ENCODE measurements at regions of chr3 and their contacts with region 1.

Region 1: GRCh38 chr3:172341482-172342059 is 106.7 kb downstream of the GHSR start:
- DNase-seq: peak in 7 of 9 donors; percentile 30 to 73 (median 67)
- ATAC-seq: peak; percentile 85
- H3K4me3 ChIP-seq: no peak overlapping the region
- H3K4me3 Mint-ChIP-seq: no peak overlapping the region
- H3K27ac ChIP-seq: no peak overlapping the region
- H3K27ac Mint-ChIP-seq: no peak overlapping the region
- H3K4me1 ChIP-seq: no peaks in the 10 kb centered on the region
- H3K4me1 Mint-ChIP-seq: peaks cover 0 to 2% (median 0%) of the 10 kb centered on the region in 7 donors
- H3K27me3 ChIP-seq: no peaks in the 10 kb centered on the region
- H3K27me3 Mint-ChIP-seq: no peaks in the 10 kb centered on the region

Region 2: GRCh38 chr3:171049861-171050444 is 1291.6 kb before region 1 on chr3:
- CTCF ChIA-PET with region 1: no interaction called
- POLR2A ChIA-PET with region 1: no interaction called
- intact Hi-C with region 1: loop called in 1 of 2 experiments (anchors 1 kb)
- DNase-seq: peak in 6 of 9 donors; percentile 8 to 36 (median 14)
- ATAC-seq: peak; percentile 67
- H3K4me3 ChIP-seq: no peak overlapping the region
- H3K4me3 Mint-ChIP-seq: no peak overlapping the region
- H3K27ac ChIP-seq: no peak overlapping the region
- H3K27ac Mint-ChIP-seq: no peak overlapping the region
- H3K4me1 ChIP-seq: no peaks in the 10 kb centered on the region
- H3K4me1 Mint-ChIP-seq: no peaks in the 10 kb centered on the region
- H3K27me3 ChIP-seq: no peaks in the 10 kb centered on the region
- H3K27me3 Mint-ChIP-seq: peaks cover 9 to 27% (median 13%) of the 10 kb centered on the region in 5 donors

Region 3: DNA sequence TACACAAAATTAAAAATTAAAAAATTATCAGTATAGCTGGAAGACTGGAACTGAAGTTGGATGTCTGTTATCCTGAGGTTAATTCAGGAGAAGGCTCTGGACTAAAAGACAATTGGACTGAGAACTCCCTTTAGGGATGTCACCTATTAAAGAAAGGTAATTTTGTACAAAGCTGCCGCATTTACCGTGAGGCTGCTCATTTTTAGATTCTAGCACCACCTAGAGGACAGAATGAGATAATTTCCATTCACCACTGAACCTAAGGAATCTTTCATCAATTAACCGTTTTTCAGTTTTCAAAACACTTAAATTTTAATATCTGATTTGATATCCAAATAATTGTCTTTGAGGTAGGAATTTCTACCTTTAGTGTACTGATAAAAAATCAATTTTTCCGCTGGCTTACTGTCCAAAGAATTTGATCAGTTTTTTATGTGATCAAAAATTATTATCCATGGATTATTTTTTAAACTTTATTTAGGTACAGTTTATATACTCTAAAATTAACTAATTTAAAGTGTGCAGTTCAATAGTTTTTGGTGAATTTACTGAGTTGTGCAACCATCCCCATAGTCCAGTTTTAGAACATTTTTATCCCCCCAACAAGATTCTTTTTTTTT is 774.7 kb before region 1 on chr3:
- CTCF ChIA-PET with region 1: no interaction called
- POLR2A ChIA-PET with region 1: no interaction called
- intact Hi-C with region 1: loop called (anchors 2 to 5 kb)
- DNase-seq: peak in 7 of 9 donors; percentile 22 to 67 (median 54)
- ATAC-seq: peak; percentile 72
- H3K4me3 ChIP-seq: no peak overlapping the region
- H3K4me3 Mint-ChIP-seq: no peak overlapping the region
- H3K27ac ChIP-seq: no peak overlapping the region
- H3K27ac Mint-ChIP-seq: peak overlapping the region in 1 of 9 donors; percentile 44
- H3K4me1 ChIP-seq: peaks cover 0 to 4% of the 10 kb centered on the region in 2 donors
- H3K4me1 Mint-ChIP-seq: peaks cover 3 to 38% (median 6%) of the 10 kb centered on the region in 7 donors
- H3K27me3 ChIP-seq: no peaks in the 10 kb centered on the region
- H3K27me3 Mint-ChIP-seq: peaks cover 0 to 32% (median 0%) of the 10 kb centered on the region in 5 donors

Region 4: DNA sequence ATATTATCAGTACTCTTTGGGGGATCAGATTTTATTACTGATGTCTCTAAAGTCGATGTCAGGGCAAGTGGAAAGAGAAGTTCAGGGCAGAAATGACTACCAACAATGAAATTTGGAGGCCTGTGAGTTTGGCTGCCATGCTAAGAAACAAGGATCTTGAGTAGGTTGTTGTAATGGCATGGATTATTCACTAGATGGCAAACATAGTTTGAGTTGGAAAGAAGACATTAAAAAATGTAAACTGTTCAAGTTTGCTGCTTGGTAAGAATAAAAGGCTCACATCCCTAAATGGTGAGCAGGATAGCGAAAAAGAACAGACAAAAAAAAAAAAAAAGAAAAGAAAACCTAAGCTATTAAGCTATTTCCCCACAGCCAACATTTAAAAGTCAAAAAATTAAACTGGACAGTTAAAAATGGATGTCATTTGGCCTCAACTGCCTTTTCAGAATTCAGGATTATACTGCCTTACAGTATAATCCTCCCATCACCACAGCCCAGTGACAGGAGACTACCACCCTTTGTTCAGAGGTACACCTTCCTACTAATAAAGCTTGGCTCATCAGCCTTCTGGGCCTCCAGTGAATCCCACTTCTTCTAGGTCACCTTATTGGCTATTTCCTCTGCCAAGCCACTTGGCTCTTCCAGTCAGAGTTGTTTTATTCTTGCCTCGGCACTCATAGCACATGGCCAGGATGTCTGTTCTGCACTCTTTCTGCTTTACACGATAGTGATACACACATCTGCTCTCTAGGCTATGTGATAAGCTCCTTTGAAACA is 695.0 kb before region 1 on chr3:
- CTCF ChIA-PET with region 1: interaction called, 3 read pairs
- POLR2A ChIA-PET with region 1: no interaction called
- intact Hi-C with region 1: loop called (anchors 1 to 2 kb)
- DNase-seq: peak in 5 of 9 donors; percentile 2 to 19 (median 11)
- ATAC-seq: peak; percentile 40
- H3K4me3 ChIP-seq: no peak overlapping the region
- H3K4me3 Mint-ChIP-seq: no peak overlapping the region
- H3K27ac ChIP-seq: no peak overlapping the region
- H3K27ac Mint-ChIP-seq: no peak overlapping the region
- H3K4me1 ChIP-seq: no peaks in the 10 kb centered on the region
- H3K4me1 Mint-ChIP-seq: no peaks in the 10 kb centered on the region
- H3K27me3 ChIP-seq: no peaks in the 10 kb centered on the region
- H3K27me3 Mint-ChIP-seq: peaks cover 0 to 2% (median 0%) of the 10 kb centered on the region in 5 donors

Region 5: DNA sequence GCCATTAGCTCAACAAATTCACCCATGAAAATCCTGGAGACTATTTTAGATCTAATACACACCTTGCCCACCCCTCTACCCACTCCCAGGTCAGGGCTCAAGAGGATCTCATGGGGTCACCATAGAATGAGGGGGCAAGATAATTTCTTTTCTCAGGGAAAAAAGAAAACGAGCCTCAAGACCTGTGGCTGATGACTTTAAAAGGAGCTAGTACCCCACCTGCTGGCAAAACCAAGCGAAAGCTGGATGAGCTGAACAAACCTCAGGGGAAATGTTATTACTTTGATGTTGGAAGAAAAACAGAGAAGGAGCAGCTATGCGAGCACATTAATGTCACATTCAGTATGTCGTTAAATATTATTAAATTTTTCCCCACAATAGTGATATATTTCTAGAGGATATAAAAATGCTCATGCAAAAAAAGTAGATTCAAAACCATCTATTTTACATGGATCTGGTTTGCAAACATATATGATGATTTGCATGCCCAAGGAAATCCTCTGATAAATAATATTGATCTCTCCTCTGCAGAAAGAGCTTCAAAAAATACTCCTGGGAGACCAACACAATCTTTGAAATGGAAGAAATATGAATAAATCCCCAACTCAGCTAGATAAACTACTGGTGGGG is 569.0 kb before region 1 on chr3:
- CTCF ChIA-PET with region 1: interaction called, 9 read pairs
- POLR2A ChIA-PET with region 1: no interaction called
- intact Hi-C with region 1: loop called (anchors 1 to 10 kb)
- DNase-seq: peak in 7 of 9 donors; percentile 6 to 55 (median 36)
- ATAC-seq: peak; percentile 58
- H3K4me3 ChIP-seq: no peak overlapping the region
- H3K4me3 Mint-ChIP-seq: no peak overlapping the region
- H3K27ac ChIP-seq: no peak overlapping the region
- H3K27ac Mint-ChIP-seq: no peak overlapping the region
- H3K4me1 ChIP-seq: no peaks in the 10 kb centered on the region
- H3K4me1 Mint-ChIP-seq: peaks cover 0 to 9% (median 0%) of the 10 kb centered on the region in 7 donors
- H3K27me3 ChIP-seq: no peaks in the 10 kb centered on the region
- H3K27me3 Mint-ChIP-seq: peaks cover 0 to 29% (median 0%) of the 10 kb centered on the region in 5 donors

Region 6: GRCh38 chr3:172280406-172281051 is 61.0 kb before region 1 on chr3:
- CTCF ChIA-PET with region 1: no interaction called
- POLR2A ChIA-PET with region 1: no interaction called
- intact Hi-C with region 1: no loop called
- DNase-seq: no peak
- ATAC-seq: no peak
- H3K4me3 ChIP-seq: no peak overlapping the region
- H3K4me3 Mint-ChIP-seq: no peak overlapping the region
- H3K27ac ChIP-seq: no peak overlapping the region
- H3K27ac Mint-ChIP-seq: no peak overlapping the region
- H3K4me1 ChIP-seq: no peaks in the 10 kb centered on the region
- H3K4me1 Mint-ChIP-seq: peaks cover 0 to 9% (median 3%) of the 10 kb centered on the region in 7 donors
- H3K27me3 ChIP-seq: no peaks in the 10 kb centered on the region
- H3K27me3 Mint-ChIP-seq: no peaks in the 10 kb centered on the region

Region 7: DNA sequence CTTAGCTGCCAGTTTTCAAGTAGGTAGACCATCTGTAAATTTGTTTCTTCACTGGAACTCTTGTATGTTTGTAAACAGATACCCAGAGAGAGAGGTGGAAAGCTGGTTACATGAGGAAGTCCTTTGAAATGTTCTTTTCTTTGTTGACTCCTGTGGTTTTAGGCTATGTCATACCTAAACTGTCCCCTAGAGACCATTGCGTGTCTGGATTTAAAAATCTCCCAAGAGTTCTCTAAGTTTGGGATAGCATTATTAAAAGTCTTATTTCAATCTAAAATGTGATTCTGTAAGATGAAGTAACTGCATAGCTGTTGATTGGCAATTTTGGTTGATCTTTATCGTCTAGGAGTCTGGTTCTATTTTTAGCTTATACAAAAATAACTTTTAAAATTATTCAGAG is 20.5 kb before region 1 on chr3:
- CTCF ChIA-PET with region 1: no interaction called
- POLR2A ChIA-PET with region 1: no interaction called
- intact Hi-C with region 1: no loop called
- DNase-seq: no peak
- ATAC-seq: no peak
- H3K4me3 ChIP-seq: no peak overlapping the region
- H3K4me3 Mint-ChIP-seq: no peak overlapping the region
- H3K27ac ChIP-seq: no peak overlapping the region
- H3K27ac Mint-ChIP-seq: peak overlapping the region in 1 of 9 donors; percentile 12
- H3K4me1 ChIP-seq: no peaks in the 10 kb centered on the region
- H3K4me1 Mint-ChIP-seq: peaks cover 0 to 23% (median 0%) of the 10 kb centered on the region in 7 donors
- H3K27me3 ChIP-seq: no peaks in the 10 kb centered on the region
- H3K27me3 Mint-ChIP-seq: no peaks in the 10 kb centered on the region

Region 8: DNA sequence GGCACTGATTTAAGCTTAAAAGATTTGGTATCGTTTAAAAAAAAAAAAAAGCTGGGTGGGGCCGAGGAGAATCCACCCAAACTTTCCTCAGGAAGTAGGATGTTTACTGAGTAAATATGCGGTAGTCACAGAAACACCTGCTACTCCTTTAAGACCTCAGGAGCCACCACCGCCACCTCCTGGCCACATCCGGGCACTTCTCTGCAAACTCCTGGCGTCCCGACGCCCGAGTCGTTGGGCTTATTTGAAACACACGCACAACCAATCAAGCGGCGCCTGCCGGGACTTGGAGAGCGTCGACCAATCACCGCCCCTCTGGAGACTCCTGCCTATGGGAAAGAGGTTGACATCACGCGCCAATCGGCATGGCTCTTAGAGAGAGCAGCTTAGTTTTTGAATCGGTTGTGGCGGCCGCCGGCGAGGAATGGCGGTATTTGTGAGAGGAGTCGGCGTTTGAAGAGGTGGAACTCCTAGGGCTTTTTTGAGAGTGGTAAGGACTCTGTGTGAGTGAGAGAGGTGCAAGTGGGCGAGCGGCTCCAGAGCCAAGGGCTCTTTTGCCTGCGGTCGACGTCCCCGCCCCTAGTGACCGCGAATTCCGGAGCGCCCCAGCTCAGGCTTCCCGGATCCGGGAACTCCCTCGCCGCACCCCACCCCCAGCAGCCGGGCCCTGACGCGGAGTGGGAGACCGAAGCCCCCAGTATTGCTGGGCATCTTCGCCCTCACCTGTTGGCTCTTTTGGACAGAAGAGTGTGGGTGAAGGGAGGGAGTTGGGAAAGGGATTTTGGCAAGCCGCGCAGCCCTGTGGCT is 409.0 kb after region 1 on chr3 and contains the start of gene ECT2:
- CTCF ChIA-PET with region 1: no interaction called
- POLR2A ChIA-PET with region 1: no interaction called
- intact Hi-C with region 1: loop called in 1 of 2 experiments (anchors 5 kb)
- DNase-seq: peak; percentile 87 to 98 (median 94)
- ATAC-seq: peak; percentile 98
- H3K4me3 ChIP-seq: peak within 1 kb of the TSS; percentile 88
- H3K4me3 Mint-ChIP-seq: peak within 1 kb of the TSS; percentile 88 to 100 (median 96)
- H3K27ac ChIP-seq: peak within 1 kb of the TSS; percentile 63
- H3K27ac Mint-ChIP-seq: peak within 1 kb of the TSS; percentile 52 to 98 (median 85)
- H3K4me1 ChIP-seq: peaks cover 5% of the 10 kb centered on the region in 2 donors
- H3K4me1 Mint-ChIP-seq: peaks cover 6 to 45% (median 15%) of the 10 kb centered on the region in 7 donors
- H3K27me3 ChIP-seq: no peaks in the 10 kb centered on the region
- H3K27me3 Mint-ChIP-seq: peaks cover 0 to 8% (median 0%) of the 10 kb centered on the region in 5 donors
- total RNA-seq, gene ECT2: 1.3 to 41.2 (median 2.1) TPM